ENCODE measurements at regions of chr18 and their contacts with region 1.

Region 1: GRCh38 chr18:70428439-70428838 is 139.6 kb downstream of the SOCS6 start:
- DNase-seq: no peak
- ATAC-seq: peak in 3 of 4 donors; percentile 9 to 68 (median 48)
- H3K4me3 ChIP-seq: no peak overlapping the region
- H3K27ac ChIP-seq: no peak overlapping the region
- H3K4me1 ChIP-seq: no peaks in the 10 kb centered on the region
- H3K27me3 ChIP-seq: no peaks in the 10 kb centered on the region
- CTCF ChIP-seq: no peak

Region 2: DNA sequence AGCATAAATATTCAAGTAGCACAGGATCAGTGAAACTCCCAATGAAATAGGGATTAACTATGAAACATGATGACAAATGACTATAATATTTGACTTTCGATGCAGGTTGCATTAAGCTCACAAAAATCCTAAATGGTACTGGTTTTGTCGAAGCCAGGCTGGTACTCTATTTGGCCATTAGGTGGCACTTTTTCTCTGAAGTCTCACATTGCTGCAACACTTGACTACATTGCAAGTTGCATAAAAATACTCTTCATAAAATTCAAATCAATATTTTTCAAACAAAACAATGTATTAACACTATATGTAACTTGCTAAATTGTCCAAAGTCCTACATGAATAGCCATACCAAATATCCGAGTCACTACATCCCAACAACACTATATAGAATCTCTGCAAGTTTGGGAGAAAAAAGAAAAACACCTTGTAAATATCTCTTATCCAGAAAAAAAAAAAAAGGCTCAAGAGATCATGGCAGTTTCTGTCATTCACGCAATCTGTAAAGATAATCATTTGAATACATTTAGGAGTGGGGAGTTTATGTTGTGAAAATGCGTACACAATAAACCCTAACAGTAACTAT is 232.5 kb before region 1 on chr18:
- intact Hi-C with region 1: loop called in 2 of 3 experiments (anchors 5 kb)
- DNase-seq: peak in 1 of 6 donors; percentile 25
- ATAC-seq: peak in 3 of 4 donors; percentile 71 to 83 (median 82)
- H3K4me3 ChIP-seq: no peak overlapping the region
- H3K27ac ChIP-seq: no peak overlapping the region
- H3K4me1 ChIP-seq: no peaks in the 10 kb centered on the region
- H3K27me3 ChIP-seq: no peaks in the 10 kb centered on the region
- CTCF ChIP-seq: peak; percentile 24 to 78 (median 65)

Region 3: GRCh38 chr18:70384181-70384790 is 44.2 kb before region 1 on chr18:
- intact Hi-C with region 1: no loop called
- DNase-seq: no peak
- ATAC-seq: no peak
- H3K4me3 ChIP-seq: no peak overlapping the region
- H3K27ac ChIP-seq: no peak overlapping the region
- H3K4me1 ChIP-seq: peaks cover 0 to 7% (median 6%) of the 10 kb centered on the region in 3 donors
- H3K27me3 ChIP-seq: no peaks in the 10 kb centered on the region
- CTCF ChIP-seq: no peak